Mucosa of descending colon (tissue), 3 donors: ENCODE measurements at regions of chr1 and their contacts with region 1.

Region 1: GRCh38 chr1:155167166-155168104 is 5.7 kb downstream of the KRTCAP2 start:
- DNase-seq: peak; percentile 90 to 92 (median 91)
- ATAC-seq: peak; percentile 93
- H3K4me3 ChIP-seq: no peak overlapping the region
- H3K4me1 ChIP-seq: peaks cover 15% of the 10 kb centered on the region
- CTCF ChIP-seq: peak; percentile 59

Region 2: GRCh38 chr1:155091071-155091709 is 76.2 kb before region 1 on chr1:
- intact Hi-C with region 1: loop called (anchors 2 to 5 kb)
- DNase-seq: peak; percentile 80 to 86 (median 86)
- ATAC-seq: peak; percentile 84
- H3K4me3 ChIP-seq: no peak overlapping the region
- H3K4me1 ChIP-seq: peaks cover 10% of the 10 kb centered on the region
- CTCF ChIP-seq: peak; percentile 96

Region 3: GRCh38 chr1:155117617-155118016 is 49.8 kb before region 1 on chr1:
- intact Hi-C with region 1: loop called in 1 of 2 experiments (anchors 10 kb)
- DNase-seq: peak in 1 of 3 donors; percentile 44
- ATAC-seq: peak; percentile 72
- H3K4me3 ChIP-seq: no peak overlapping the region
- H3K4me1 ChIP-seq: peaks cover 21% of the 10 kb centered on the region
- CTCF ChIP-seq: no peak

Region 4: DNA sequence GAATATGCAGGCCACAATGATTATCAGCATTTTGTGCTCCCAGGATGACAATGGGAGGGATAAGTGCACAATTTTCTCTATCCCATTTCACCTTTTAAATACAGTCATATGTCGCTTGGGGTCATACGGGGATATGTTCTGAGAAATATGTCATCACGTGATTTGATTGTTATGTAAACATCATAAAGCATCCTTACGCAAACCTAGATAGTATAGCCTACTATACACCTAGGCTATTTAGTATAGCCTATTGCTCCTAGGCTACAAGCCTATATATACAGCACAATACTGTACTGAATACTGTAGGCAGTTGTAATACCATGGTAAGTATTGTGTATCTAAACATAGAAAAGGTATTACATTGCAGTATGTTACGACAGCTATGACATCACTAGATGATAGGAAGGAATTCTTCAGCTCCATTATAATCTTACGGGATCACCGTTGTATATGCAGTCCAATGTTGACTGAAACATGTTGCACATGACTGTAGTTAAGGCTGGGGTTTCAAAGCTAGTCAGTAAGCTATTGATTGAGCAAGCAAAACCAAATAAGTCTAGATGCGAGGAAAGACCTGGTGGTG is 172.2 kb after region 1 on chr1:
- intact Hi-C with region 1: no loop called
- DNase-seq: no peak
- ATAC-seq: peak; percentile 75
- H3K4me3 ChIP-seq: no peak overlapping the region
- H3K4me1 ChIP-seq: no peaks in the 10 kb centered on the region
- CTCF ChIP-seq: no peak